HepG2 (cell line): ENCODE measurements at regions of chr3 and their contacts with region 1.

Region 1: DNA sequence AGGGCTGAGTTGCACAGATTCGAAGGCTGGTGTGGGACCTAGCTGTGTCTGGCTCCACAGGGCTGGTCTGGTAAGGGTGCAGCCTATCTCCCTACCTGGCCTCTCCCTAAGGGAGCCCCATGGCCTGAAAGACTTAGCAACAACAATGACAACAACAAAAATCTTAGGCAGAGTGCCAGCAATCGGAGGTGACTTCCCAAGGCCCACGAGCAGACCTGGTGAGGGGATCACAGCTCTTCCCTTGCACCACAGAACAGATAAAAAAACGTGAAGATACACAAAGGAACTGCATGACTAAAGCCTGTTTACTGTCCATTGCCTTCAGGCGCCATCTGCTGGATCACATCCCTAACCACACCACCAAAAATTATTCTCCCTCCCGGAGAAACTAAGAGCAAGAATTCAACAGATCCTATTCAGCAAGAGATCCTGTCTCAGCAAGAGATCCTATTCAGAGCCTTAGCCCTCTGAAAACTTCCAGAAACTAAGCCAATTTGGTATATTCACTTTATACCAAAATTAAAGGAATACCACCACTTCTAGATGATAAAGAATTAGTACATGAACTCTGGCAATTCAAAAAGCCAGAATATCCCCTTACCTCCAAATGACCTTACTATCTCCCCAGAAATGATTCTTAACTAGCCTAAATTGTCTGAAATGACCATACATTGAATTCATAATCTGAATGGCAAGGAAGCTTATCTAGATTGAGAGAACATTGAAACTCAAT is 24.1 kb upstream of the OR5K4 start:
- DNase-seq: peak; percentile 40
- ATAC-seq: peak; percentile 93
- H3K4me3 ChIP-seq: no peak overlapping the region
- H3K27ac ChIP-seq: no peak overlapping the region
- H3K4me1 ChIP-seq: 0 out of 2 replicates have a peak, but pooled peaks cover 10% of the 10 kb centered on the region
- H3K27me3 ChIP-seq: no peaks in the 10 kb centered on the region
- CTCF ChIP-seq: peak; percentile 85
- EP300 ChIP-seq: no peak
- POLR2A ChIP-seq: no peak
- RAD21 ChIP-seq: peak; percentile 72

Region 2: DNA sequence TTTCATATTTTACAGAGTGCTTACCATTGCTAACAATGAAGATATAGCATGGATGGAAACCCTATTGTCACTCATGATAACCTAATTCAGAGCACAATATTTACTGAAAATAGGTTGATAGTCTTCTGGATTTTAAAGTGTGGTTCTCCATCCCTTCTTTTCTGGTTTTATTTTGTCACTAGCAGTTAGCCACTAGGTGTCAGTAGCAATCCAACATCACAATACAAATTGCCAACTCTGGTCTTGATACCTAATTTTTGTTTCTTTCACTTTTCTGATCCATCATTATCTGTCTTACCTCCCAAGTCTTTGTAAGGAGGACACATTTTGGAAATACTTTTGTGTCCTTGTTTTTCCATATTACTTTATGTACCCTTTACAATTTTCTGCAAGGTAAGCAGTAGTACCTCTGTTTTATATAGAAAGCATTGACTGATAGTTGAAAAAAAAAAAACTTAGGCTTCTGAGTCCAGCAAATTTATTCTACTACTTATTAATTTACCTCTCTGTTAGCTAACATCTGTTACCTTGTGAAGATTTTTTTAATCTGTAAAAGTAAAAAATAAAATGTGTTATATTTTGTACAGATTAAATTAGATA is 536.0 kb before region 1 on chr3:
- CTCF ChIA-PET with region 1: no interaction called
- POLR2A ChIA-PET with region 1: no interaction called
- in situ Hi-C with region 1: loop called (anchors 25 kb)
- intact Hi-C with region 1: loop called (anchors 10 kb)
- DNase-seq: peak; percentile 60
- ATAC-seq: peak; percentile 48; the same call in 2 of the 3 replicates
- H3K4me3 ChIP-seq: no peak overlapping the region
- H3K27ac ChIP-seq: no peak overlapping the region
- H3K4me1 ChIP-seq: no peaks in the 10 kb centered on the region
- H3K27me3 ChIP-seq: no peaks in the 10 kb centered on the region
- CTCF ChIP-seq: peak; percentile 81
- EP300 ChIP-seq: no peak
- POLR2A ChIP-seq: no peak
- RAD21 ChIP-seq: peak; percentile 73; the same call in 1 of the 2 replicates

Region 3: DNA sequence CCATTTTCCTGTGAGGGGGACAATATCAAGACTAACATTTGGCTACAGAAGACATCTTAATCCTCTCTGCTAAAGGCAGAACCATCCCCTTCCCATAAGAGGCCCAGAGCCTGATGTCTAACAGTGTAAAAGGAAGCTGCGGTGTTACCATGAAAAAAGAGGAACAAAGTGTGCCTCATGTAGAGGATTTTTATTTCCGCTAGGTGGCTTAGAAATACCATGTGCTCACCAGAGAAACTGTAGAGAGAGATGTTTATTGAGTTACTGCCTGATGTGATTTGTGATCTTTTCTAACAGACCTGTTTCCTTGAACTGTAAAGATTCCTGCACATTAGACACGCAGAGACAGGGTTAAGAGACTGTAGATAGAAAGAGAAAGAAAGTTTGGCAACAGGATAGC is 141.0 kb before region 1 on chr3:
- CTCF ChIA-PET with region 1: interaction called, 4 read pairs
- POLR2A ChIA-PET with region 1: no interaction called
- in situ Hi-C with region 1: no loop called
- intact Hi-C with region 1: loop called (anchors 1 kb)
- DNase-seq: peak; percentile 16
- ATAC-seq: peak; percentile 88
- H3K4me3 ChIP-seq: no peak overlapping the region
- H3K27ac ChIP-seq: no peak overlapping the region
- H3K4me1 ChIP-seq: no peaks in the 10 kb centered on the region
- H3K27me3 ChIP-seq: no peaks in the 10 kb centered on the region
- CTCF ChIP-seq: peak; percentile 55
- EP300 ChIP-seq: no peak
- POLR2A ChIP-seq: no peak
- RAD21 ChIP-seq: no peak